CD8-positive, alpha-beta T cell (primary cell): ENCODE measurements at regions of chr12 and their contacts with region 1.

Region 1: DNA sequence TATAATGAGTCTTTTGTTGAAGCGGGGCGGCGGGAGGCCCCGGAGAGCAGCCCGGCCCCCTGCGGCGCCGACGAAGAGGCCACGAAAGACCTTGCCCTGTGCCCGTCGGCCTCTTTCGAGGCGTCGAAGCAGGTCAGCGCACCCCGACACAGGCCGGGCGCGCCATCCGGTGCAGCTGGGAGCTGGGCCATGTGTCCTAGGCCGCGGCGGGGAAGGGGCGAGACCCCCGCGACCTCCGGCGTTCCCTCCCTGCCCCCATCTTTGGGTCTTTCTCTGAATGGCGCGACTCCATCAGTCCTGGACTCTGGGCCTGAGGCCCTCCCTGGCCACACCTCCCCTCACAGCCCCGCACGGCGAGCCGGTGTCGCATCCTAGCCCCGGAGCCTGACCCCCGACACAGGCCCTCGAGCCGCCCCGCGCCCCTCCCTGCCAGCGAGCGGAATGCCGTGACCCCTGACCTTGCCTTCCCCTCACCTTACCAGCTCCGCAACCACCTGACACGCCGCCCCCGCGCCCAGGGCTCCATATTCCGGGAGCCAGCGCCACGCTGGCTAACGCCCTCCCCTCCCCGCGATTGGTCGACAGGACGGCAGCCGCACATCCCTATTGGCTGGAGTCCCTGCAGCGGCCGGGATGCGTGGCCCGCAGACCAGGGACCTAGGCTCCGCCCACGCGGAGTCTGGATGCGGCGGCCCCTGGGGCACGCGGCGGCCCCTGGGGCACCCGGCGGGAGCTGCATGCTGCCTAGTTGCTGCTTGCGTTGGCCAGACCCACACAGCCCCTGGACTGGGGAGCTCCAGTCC is at the start of gene SLC11A2:
- DNase-seq: peak; percentile 75 to 96 (median 90)
- ATAC-seq: peak; percentile 90
- H3K4me3 ChIP-seq: peak within 1 kb of the TSS; percentile 76 to 83
- H3K4me3 Mint-ChIP-seq: peak within 1 kb of the TSS; percentile 98
- H3K27ac ChIP-seq: peak within 1 kb of the TSS; percentile 72 to 80
- H3K27ac Mint-ChIP-seq: peak within 1 kb of the TSS; percentile 99
- H3K4me1 ChIP-seq: peaks cover 41% of the 10 kb centered on the region
- H3K4me1 Mint-ChIP-seq: peaks cover 56% of the 10 kb centered on the region
- H3K27me3 ChIP-seq: no peaks in the 10 kb centered on the region
- H3K27me3 Mint-ChIP-seq: no peaks in the 10 kb centered on the region
- CTCF ChIP-seq: no peak
- total RNA-seq, gene SLC11A2: 35.1 to 43.1 TPM

Region 2: GRCh38 chr12:50825372-50825838 is 200.6 kb before region 1 on chr12:
- CTCF ChIA-PET with region 1: interaction called, 9 read pairs
- POLR2A ChIA-PET with region 1: no interaction called
- intact Hi-C with region 1: loop called in 1 of 2 experiments (anchors 2 kb)
- DNase-seq: peak in 2 of 9 experiments; percentile 67 to 81
- ATAC-seq: peak; percentile 92
- H3K4me3 ChIP-seq: no peak overlapping the region
- H3K4me3 Mint-ChIP-seq: no peak overlapping the region
- H3K27ac ChIP-seq: peak overlapping the region; percentile 6 to 26
- H3K27ac Mint-ChIP-seq: peak overlapping the region; percentile 87
- H3K4me1 ChIP-seq: no peaks in the 10 kb centered on the region
- H3K4me1 Mint-ChIP-seq: peaks cover 7% of the 10 kb centered on the region
- H3K27me3 ChIP-seq: no peaks in the 10 kb centered on the region
- H3K27me3 Mint-ChIP-seq: no peaks in the 10 kb centered on the region
- CTCF ChIP-seq: peak; percentile 67

Region 3: GRCh38 chr12:50986966-50987737 is 38.9 kb before region 1 on chr12:
- CTCF ChIA-PET with region 1: interaction called, 8 read pairs
- POLR2A ChIA-PET with region 1: interaction called, 4 read pairs
- intact Hi-C with region 1: loop called in 1 of 2 experiments (anchors 5 kb)
- DNase-seq: peak in 7 of 9 experiments; percentile 18 to 62 (median 31)
- ATAC-seq: peak; percentile 58
- H3K4me3 ChIP-seq: no peak overlapping the region
- H3K4me3 Mint-ChIP-seq: no peak overlapping the region
- H3K27ac ChIP-seq: no peak overlapping the region
- H3K27ac Mint-ChIP-seq: peak overlapping the region; percentile 23
- H3K4me1 ChIP-seq: no peaks in the 10 kb centered on the region
- H3K4me1 Mint-ChIP-seq: peaks cover 6% of the 10 kb centered on the region
- H3K27me3 ChIP-seq: no peaks in the 10 kb centered on the region
- H3K27me3 Mint-ChIP-seq: no peaks in the 10 kb centered on the region
- CTCF ChIP-seq: no peak

Region 4: GRCh38 chr12:51047655-51048540 is 21.9 kb after region 1 on chr12 and contains the start of gene LETMD1:
- CTCF ChIA-PET with region 1: interaction called, 9 read pairs
- POLR2A ChIA-PET with region 1: interaction called, 7 read pairs
- intact Hi-C with region 1: loop called (anchors 1 kb)
- DNase-seq: peak; percentile 83 to 99 (median 88)
- ATAC-seq: peak; percentile 94
- H3K4me3 ChIP-seq: peak within 1 kb of the TSS; percentile 79 to 83
- H3K4me3 Mint-ChIP-seq: peak within 1 kb of the TSS; percentile 98
- H3K27ac ChIP-seq: peak within 1 kb of the TSS; percentile 74 to 96
- H3K27ac Mint-ChIP-seq: peak within 1 kb of the TSS; percentile 97
- H3K4me1 ChIP-seq: peaks cover 23% of the 10 kb centered on the region
- H3K4me1 Mint-ChIP-seq: peaks cover 34% of the 10 kb centered on the region
- H3K27me3 ChIP-seq: no peaks in the 10 kb centered on the region
- H3K27me3 Mint-ChIP-seq: no peaks in the 10 kb centered on the region
- CTCF ChIP-seq: peak; percentile 95
- total RNA-seq, gene LETMD1: 51.3 to 55.2 TPM

Region 5: DNA sequence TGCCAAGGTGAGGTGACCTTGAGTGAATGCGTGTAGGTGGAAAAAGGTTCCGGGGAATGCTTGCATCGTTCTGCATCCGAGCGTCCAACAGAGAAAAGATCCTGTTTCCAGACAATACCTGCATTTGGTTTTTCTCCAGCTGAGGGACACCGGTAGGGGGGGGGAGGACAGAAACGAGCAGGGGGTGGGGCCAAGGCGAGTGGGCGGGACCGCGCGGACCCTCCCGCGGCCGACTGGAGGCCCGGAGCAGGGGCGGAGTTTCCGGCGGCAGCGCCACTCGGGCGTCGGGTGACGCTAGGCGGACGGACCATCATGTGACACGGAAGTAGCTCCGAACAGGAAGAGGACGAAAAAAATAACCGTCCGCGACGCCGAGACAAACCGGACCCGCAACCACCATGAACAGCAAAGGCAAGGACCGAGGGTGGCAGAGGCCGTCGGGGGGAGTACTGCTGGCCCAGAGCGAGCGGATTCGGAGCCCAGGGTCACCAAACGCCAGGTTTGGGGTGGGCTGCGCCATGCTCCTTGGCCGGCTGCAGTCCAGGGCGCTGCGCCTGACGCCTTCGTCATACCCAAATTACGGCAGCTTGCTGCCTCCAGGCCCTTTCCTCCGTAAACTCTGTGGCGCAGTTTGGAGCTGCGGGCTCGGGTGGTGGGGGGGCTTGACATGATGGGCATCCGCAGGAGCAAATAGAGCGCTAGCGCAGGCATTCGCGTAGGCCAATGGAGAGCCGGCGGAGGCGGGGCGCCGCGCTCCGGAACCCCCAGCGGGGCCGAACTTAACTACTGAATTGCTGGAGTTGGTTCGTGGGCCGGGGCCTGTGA is 212.7 kb after region 1 on chr12 and contains the start of gene DAZAP2:
- CTCF ChIA-PET with region 1: no interaction called
- POLR2A ChIA-PET with region 1: no interaction called
- intact Hi-C with region 1: loop called in 1 of 2 experiments (anchors 1 kb)
- DNase-seq: peak; percentile 89 to 98 (median 96)
- ATAC-seq: peak; percentile 88
- H3K4me3 ChIP-seq: peak within 1 kb of the TSS; percentile 80 to 99
- H3K4me3 Mint-ChIP-seq: peak within 1 kb of the TSS; percentile 94
- H3K27ac ChIP-seq: peak within 1 kb of the TSS; percentile 97 to 100
- H3K27ac Mint-ChIP-seq: peak within 1 kb of the TSS; percentile 100
- H3K4me1 ChIP-seq: peaks cover 32% of the 10 kb centered on the region
- H3K4me1 Mint-ChIP-seq: peaks cover 45% of the 10 kb centered on the region
- H3K27me3 ChIP-seq: no peaks in the 10 kb centered on the region
- H3K27me3 Mint-ChIP-seq: no peaks in the 10 kb centered on the region
- CTCF ChIP-seq: no peak
- total RNA-seq, gene DAZAP2: 340 to 343 TPM